Activated T-helper 2 cell treated with anti-CD3 and anti-CD28 coated beads, Interferon-gamma antibody, Interleukin-2, Interleukin-4, amounts not matched to agents 10 μg/mL and 5 μg/mL and 100 μg/mL, durations not matched to agents 14 hours and 24 hours and 36 hours (primary cell): ENCODE measurements at regions of chr2 and their contacts with region 1.

Region 1: GRCh38 chr2:110865188-110865587 is 132.8 kb downstream of the ACOXL start:
- DNase-seq: peak; percentile 22
- H3K4me3 Mint-ChIP-seq: peak overlapping the region; percentile 3
- H3K27ac Mint-ChIP-seq: peak overlapping the region; percentile 10
- H3K4me1 Mint-ChIP-seq: peaks cover 74% of the 10 kb centered on the region
- H3K27me3 Mint-ChIP-seq: peaks cover 18% of the 10 kb centered on the region

Region 2: GRCh38 chr2:110677530-110678456 is 187.4 kb before region 1 on chr2 and contains the start of gene BUB1:
- intact Hi-C with region 1: loop called (anchors 5 kb)
- DNase-seq: peak; percentile 96
- H3K4me3 Mint-ChIP-seq: peak within 1 kb of the TSS; percentile 86
- H3K27ac Mint-ChIP-seq: peak within 1 kb of the TSS; percentile 90
- H3K4me1 Mint-ChIP-seq: peaks cover 31% of the 10 kb centered on the region
- H3K27me3 Mint-ChIP-seq: peaks cover 2% of the 10 kb centered on the region
- total RNA-seq, gene BUB1: 68.4 and 74.4 TPM in 2 replicates

Region 3: DNA sequence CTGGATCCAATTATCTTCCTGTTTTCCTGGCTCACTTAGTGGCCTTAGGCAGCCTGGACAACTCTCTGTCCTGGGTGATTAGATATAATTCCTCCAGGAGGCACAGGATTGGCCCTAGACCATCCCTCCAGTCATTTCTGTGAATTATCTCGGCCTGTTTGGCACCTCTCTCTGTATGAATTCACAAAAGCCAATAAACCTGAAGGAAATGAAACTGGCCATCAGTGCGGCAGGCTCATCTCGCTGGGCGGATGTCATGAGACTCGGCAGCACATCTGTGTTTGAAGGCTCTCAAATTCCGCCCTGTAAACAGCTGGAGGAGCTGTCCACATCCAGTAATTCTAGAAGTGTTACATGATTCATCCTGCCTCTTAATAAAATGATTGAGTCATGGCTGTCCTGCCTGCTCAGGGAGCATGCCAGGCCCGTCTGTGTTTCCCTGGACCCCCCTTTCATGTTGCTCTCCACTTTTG is 94.2 kb before region 1 on chr2:
- intact Hi-C with region 1: no loop called
- DNase-seq: no peak
- H3K4me3 Mint-ChIP-seq: no peak overlapping the region
- H3K27ac Mint-ChIP-seq: no peak overlapping the region
- H3K4me1 Mint-ChIP-seq: no peaks in the 10 kb centered on the region
- H3K27me3 Mint-ChIP-seq: peaks cover 16% of the 10 kb centered on the region

Region 4: GRCh38 chr2:110804915-110805314 is 60.3 kb before region 1 on chr2:
- intact Hi-C with region 1: loop called (anchors 2 kb)
- DNase-seq: no peak
- H3K4me3 Mint-ChIP-seq: no peak overlapping the region
- H3K27ac Mint-ChIP-seq: peak overlapping the region; percentile 22
- H3K4me1 Mint-ChIP-seq: peaks cover 16% of the 10 kb centered on the region
- H3K27me3 Mint-ChIP-seq: peaks cover 41% of the 10 kb centered on the region

Region 5: DNA sequence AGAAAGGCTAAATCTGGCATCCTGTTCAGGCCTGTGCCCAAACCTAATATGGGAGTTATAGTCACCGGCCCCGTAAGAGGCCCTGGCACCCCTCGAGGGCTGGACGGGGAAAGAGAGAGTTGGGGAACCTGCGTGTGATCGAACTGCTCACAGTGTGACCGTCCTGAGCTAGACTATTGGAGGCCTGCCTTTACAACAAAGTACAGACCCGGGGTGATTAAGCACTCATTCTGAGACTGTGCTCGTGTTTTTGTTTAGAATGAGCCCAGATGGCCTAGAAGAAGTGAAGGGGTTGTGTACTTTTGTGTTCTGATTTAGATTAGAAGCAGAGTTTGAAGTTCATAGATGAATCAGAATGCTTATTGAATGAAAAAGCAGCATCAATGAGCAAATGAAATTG is 17.5 kb before region 1 on chr2:
- intact Hi-C with region 1: loop called (anchors 1 kb)
- DNase-seq: no peak
- H3K4me3 Mint-ChIP-seq: no peak overlapping the region
- H3K27ac Mint-ChIP-seq: peak overlapping the region; percentile 99
- H3K4me1 Mint-ChIP-seq: peaks cover 82% of the 10 kb centered on the region
- H3K27me3 Mint-ChIP-seq: peaks cover 3% of the 10 kb centered on the region

Region 6: GRCh38 chr2:110881908-110882307 is 16.7 kb after region 1 on chr2:
- intact Hi-C with region 1: loop called (anchors 1 kb)
- DNase-seq: no peak
- H3K4me3 Mint-ChIP-seq: no peak overlapping the region
- H3K27ac Mint-ChIP-seq: no peak overlapping the region
- H3K4me1 Mint-ChIP-seq: peaks cover 13% of the 10 kb centered on the region
- H3K27me3 Mint-ChIP-seq: peaks cover 46% of the 10 kb centered on the region

Region 7: GRCh38 chr2:110973262-110973661 is 108.1 kb after region 1 on chr2:
- intact Hi-C with region 1: no loop called
- DNase-seq: no peak
- H3K4me3 Mint-ChIP-seq: no peak overlapping the region
- H3K27ac Mint-ChIP-seq: no peak overlapping the region
- H3K4me1 Mint-ChIP-seq: no peaks in the 10 kb centered on the region
- H3K27me3 Mint-ChIP-seq: peaks cover 52% of the 10 kb centered on the region

Region 8: GRCh38 chr2:111054791-111055691 is 189.9 kb after region 1 on chr2:
- intact Hi-C with region 1: loop called (anchors 5 kb)
- DNase-seq: no peak
- H3K4me3 Mint-ChIP-seq: no peak overlapping the region
- H3K27ac Mint-ChIP-seq: peak overlapping the region; percentile 64
- H3K4me1 Mint-ChIP-seq: peaks cover 33% of the 10 kb centered on the region
- H3K27me3 Mint-ChIP-seq: peaks cover 20% of the 10 kb centered on the region